ENCODE measurements at regions of chr5 and their contacts with region 1.

Region 1: DNA sequence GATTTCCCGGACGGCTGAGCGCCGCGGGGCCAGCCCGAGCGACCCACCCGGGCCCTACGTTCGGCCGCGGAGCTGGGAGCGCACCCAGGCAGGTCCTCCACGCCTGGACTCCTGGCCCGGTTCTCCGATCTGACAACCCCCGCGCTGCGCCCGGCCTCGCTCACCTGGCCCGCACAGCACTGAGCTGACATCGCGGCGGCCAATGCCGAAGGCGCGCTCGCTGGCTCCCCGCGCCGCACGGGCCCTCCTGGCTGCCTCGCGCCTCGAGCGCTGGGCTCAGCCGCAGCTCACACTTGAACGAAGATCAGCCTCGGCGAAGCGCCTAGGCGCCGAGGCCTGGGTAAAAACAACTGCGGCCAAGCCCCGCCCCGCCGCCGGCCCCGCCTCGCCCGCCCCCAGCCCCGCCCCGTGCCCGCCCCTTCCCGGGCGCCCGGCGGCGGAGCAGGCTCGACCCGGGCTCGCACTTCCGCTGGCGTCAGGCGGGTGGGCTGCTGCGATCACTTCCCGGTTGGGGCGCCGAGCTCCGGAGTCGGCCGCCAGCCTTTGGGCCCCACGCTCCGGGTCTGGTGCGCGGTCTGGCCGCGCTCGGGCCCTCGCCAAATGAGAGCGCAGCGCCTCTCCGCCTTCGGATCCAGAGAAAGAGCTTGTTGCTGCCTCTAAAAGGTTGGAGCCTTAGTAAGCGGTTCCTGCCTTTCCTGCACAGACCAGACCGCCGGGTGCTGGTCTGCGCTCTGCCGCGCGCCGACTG is at the start of gene SERINC5:
- DNase-seq: peak; percentile 78
- ATAC-seq: peak; percentile 46
- H3K4me3 Mint-ChIP-seq: peak within 1 kb of the TSS; percentile 100
- H3K27ac Mint-ChIP-seq: peak within 1 kb of the TSS; percentile 98
- H3K4me1 Mint-ChIP-seq: peaks cover 59% of the 10 kb centered on the region
- H3K27me3 Mint-ChIP-seq: peaks cover 3% of the 10 kb centered on the region; the same call in 1 of the 2 replicates
- CTCF ChIP-seq: no peak
- total RNA-seq, gene SERINC5: 128 to 139 TPM (median 139 TPM) in 3 replicates

Region 2: GRCh38 chr5:80093796-80094195 is 162.1 kb before region 1 on chr5:
- CTCF ChIA-PET with region 1: interaction called, 31 read pairs
- POLR2A ChIA-PET with region 1: interaction called, 7 read pairs
- DNase-seq: no peak
- ATAC-seq: peak; percentile 48
- H3K4me3 Mint-ChIP-seq: no peak overlapping the region
- H3K27ac Mint-ChIP-seq: peak overlapping the region; percentile 38; the same call in 1 of the 2 replicates
- H3K4me1 Mint-ChIP-seq: peaks cover 38% of the 10 kb centered on the region
- H3K27me3 Mint-ChIP-seq: no peaks in the 10 kb centered on the region; the same call in 1 of the 2 replicates
- CTCF ChIP-seq: no peak

Region 3: GRCh38 chr5:80172067-80172695 is 83.7 kb before region 1 on chr5:
- CTCF ChIA-PET with region 1: no interaction called
- POLR2A ChIA-PET with region 1: interaction called, 13 read pairs
- DNase-seq: no peak
- ATAC-seq: no peak
- H3K4me3 Mint-ChIP-seq: no peak overlapping the region
- H3K27ac Mint-ChIP-seq: no peak overlapping the region
- H3K4me1 Mint-ChIP-seq: peaks cover 31% of the 10 kb centered on the region
- H3K27me3 Mint-ChIP-seq: no peaks in the 10 kb centered on the region
- CTCF ChIP-seq: no peak

Region 4: GRCh38 chr5:80181618-80182211 is 74.2 kb before region 1 on chr5:
- CTCF ChIA-PET with region 1: interaction called, 4 read pairs
- POLR2A ChIA-PET with region 1: interaction called, 37 read pairs
- DNase-seq: no peak
- ATAC-seq: no peak
- H3K4me3 Mint-ChIP-seq: no peak overlapping the region
- H3K27ac Mint-ChIP-seq: peak overlapping the region; percentile 92
- H3K4me1 Mint-ChIP-seq: peaks cover 87% of the 10 kb centered on the region
- H3K27me3 Mint-ChIP-seq: no peaks in the 10 kb centered on the region; the same call in 1 of the 2 replicates
- CTCF ChIP-seq: no peak

Region 5: GRCh38 chr5:80268916-80269315 is 13.0 kb after region 1 on chr5:
- CTCF ChIA-PET with region 1: interaction called, 15 read pairs
- POLR2A ChIA-PET with region 1: interaction called, 15 read pairs
- DNase-seq: no peak
- ATAC-seq: no peak
- H3K4me3 Mint-ChIP-seq: no peak overlapping the region
- H3K27ac Mint-ChIP-seq: peak overlapping the region; percentile 64
- H3K4me1 Mint-ChIP-seq: peaks cover 34% of the 10 kb centered on the region
- H3K27me3 Mint-ChIP-seq: no peaks in the 10 kb centered on the region
- CTCF ChIP-seq: no peak

Region 6: DNA sequence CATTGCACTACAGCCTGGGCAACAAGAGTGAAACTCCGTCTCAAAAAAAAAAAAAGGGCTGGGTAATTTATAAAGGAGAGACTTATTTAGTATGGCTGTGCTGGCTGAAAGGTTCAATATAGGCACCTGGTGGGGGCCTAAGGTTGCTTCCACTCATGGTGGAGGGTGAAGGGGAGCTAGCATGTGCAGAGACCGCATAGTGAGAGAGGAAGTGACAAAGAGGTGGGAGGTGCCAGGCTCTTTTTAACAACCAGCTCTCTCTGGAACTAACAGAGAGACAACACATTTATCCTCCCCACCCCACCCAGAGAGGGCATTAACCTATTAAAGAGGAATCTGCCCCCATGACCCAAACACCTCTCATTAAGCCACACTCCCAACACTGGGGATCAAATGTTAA is 28.8 kb after region 1 on chr5:
- CTCF ChIA-PET with region 1: no interaction called
- POLR2A ChIA-PET with region 1: no interaction called
- DNase-seq: no peak
- ATAC-seq: peak; percentile 72
- H3K4me3 Mint-ChIP-seq: no peak overlapping the region
- H3K27ac Mint-ChIP-seq: no peak overlapping the region; the same call in 1 of the 2 replicates
- H3K4me1 Mint-ChIP-seq: peaks cover 6% of the 10 kb centered on the region
- H3K27me3 Mint-ChIP-seq: no peaks in the 10 kb centered on the region
- CTCF ChIP-seq: no peak

Region 7: GRCh38 chr5:80308526-80308925 is 52.6 kb after region 1 on chr5:
- CTCF ChIA-PET with region 1: interaction called, 13 read pairs
- POLR2A ChIA-PET with region 1: interaction called, 6 read pairs
- DNase-seq: no peak
- ATAC-seq: peak; percentile 24; the same call in 1 of the 2 replicates
- H3K4me3 Mint-ChIP-seq: no peak overlapping the region
- H3K27ac Mint-ChIP-seq: no peak overlapping the region
- H3K4me1 Mint-ChIP-seq: peaks cover 19% of the 10 kb centered on the region
- H3K27me3 Mint-ChIP-seq: no peaks in the 10 kb centered on the region; the same call in 1 of the 2 replicates
- CTCF ChIP-seq: no peak